ENCODE measurements at regions of chr4 and their contacts with region 1.

Region 1: DNA sequence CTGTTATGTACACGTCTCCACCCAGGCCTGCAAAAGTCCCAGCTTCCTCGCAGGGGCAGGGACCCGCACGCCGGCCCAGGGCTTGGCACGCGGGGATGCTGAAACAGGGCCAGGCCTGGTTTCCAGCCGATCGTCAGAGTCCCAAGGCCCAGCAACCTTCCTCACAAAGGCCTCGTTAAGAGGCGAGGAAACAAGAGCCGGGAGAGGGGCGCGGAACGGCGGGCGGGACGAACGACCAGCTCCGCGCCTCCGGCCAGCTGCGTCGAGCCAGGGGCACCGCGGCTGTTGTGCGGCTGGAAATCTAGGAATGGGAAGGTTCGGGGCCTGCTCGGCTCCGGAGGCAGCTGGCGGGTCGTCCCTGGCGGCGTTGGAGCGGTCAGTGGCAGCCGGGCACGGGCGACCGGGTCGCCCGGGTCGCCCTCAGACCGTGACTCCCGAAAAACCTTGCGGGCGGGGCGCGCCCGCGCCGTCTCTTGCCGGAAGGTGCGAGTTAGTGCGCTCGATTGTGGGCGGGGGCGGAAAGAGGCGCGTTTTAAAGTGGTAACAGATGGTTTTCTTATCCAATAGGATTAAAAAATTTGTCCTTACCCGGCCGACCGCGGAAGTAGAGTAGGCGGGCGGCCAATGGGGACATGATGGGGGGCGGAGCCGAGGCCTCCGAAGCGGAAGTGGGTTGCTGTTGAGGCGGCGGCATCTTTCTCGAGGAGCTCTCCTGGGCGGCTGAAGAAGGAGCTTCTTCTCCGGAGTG is at the start of gene RNF4:
- DNase-seq: peak; percentile 98
- H3K4me3 Mint-ChIP-seq: peak within 1 kb of the TSS; percentile 97
- H3K27ac Mint-ChIP-seq: peak within 1 kb of the TSS; percentile 98
- H3K4me1 Mint-ChIP-seq: peaks cover 42% of the 10 kb centered on the region
- H3K27me3 Mint-ChIP-seq: no peaks in the 10 kb centered on the region
- total RNA-seq, gene RNF4: 84.6 to 90.3 TPM

Region 2: GRCh38 chr4:2220016-2220630 is 248.5 kb before region 1 on chr4:
- CTCF ChIA-PET with region 1: interaction called, 15 read pairs
- POLR2A ChIA-PET with region 1: interaction called, 3 read pairs
- intact Hi-C with region 1: no loop called
- DNase-seq: peak; percentile 84
- H3K4me3 Mint-ChIP-seq: no peak overlapping the region
- H3K27ac Mint-ChIP-seq: no peak overlapping the region
- H3K4me1 Mint-ChIP-seq: peaks cover 5% of the 10 kb centered on the region
- H3K27me3 Mint-ChIP-seq: no peaks in the 10 kb centered on the region

Region 3: GRCh38 chr4:2262143-2262943 is 206.3 kb before region 1 on chr4:
- CTCF ChIA-PET with region 1: no interaction called
- POLR2A ChIA-PET with region 1: interaction called, 7 read pairs
- intact Hi-C with region 1: loop called (anchors 2 kb)
- DNase-seq: peak; percentile 99
- H3K4me3 Mint-ChIP-seq: peak overlapping the region; percentile 62
- H3K27ac Mint-ChIP-seq: peak overlapping the region; percentile 54
- H3K4me1 Mint-ChIP-seq: peaks cover 3% of the 10 kb centered on the region
- H3K27me3 Mint-ChIP-seq: no peaks in the 10 kb centered on the region

Region 4: GRCh38 chr4:2484993-2485392 is 16.4 kb after region 1 on chr4:
- CTCF ChIA-PET with region 1: interaction called, 9 read pairs
- POLR2A ChIA-PET with region 1: interaction called, 40 read pairs
- intact Hi-C with region 1: loop called (anchors 1 kb)
- DNase-seq: peak; percentile 80
- H3K4me3 Mint-ChIP-seq: peak overlapping the region; percentile 17
- H3K27ac Mint-ChIP-seq: peak overlapping the region; percentile 34
- H3K4me1 Mint-ChIP-seq: peaks cover 86% of the 10 kb centered on the region
- H3K27me3 Mint-ChIP-seq: no peaks in the 10 kb centered on the region

Region 5: DNA sequence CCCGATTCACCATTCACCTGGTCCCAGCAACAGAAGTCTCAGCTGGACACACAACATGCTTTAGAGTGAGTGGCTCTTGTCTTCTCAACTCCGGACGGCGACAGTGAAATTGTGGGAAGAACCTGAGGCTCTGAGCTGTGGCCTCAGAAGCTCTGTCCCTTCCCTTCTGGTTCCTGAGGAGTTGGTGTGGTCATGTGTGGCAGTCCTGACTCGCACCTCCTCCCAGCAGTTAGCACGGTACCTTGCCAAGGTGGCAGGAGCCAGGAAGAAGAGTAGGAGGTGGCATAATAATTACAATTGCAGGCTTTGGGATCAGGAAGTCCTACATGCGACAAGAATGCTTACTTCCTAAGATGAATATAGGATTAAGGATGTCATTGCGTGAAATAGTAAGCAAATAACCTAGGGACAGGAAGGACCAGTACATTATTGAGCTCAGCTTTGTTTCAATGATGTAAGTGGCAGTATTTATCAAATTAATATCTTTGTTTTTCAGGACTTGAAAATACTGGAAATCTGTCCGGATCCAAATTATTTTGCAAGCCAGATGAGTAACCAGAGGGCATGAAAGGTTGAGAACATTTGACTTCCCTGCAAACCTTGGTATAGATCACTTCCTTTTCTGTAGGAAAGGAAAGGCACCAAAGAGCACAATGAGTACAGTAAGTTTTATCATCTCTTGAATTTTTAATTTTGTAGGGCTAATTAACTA is 21.4 kb after region 1 on chr4:
- CTCF ChIA-PET with region 1: interaction called, 9 read pairs
- POLR2A ChIA-PET with region 1: interaction called, 40 read pairs
- intact Hi-C with region 1: loop called (anchors 1 kb)
- DNase-seq: no peak
- H3K4me3 Mint-ChIP-seq: no peak overlapping the region
- H3K27ac Mint-ChIP-seq: peak overlapping the region; percentile 76
- H3K4me1 Mint-ChIP-seq: peaks cover 63% of the 10 kb centered on the region
- H3K27me3 Mint-ChIP-seq: no peaks in the 10 kb centered on the region

Region 6: DNA sequence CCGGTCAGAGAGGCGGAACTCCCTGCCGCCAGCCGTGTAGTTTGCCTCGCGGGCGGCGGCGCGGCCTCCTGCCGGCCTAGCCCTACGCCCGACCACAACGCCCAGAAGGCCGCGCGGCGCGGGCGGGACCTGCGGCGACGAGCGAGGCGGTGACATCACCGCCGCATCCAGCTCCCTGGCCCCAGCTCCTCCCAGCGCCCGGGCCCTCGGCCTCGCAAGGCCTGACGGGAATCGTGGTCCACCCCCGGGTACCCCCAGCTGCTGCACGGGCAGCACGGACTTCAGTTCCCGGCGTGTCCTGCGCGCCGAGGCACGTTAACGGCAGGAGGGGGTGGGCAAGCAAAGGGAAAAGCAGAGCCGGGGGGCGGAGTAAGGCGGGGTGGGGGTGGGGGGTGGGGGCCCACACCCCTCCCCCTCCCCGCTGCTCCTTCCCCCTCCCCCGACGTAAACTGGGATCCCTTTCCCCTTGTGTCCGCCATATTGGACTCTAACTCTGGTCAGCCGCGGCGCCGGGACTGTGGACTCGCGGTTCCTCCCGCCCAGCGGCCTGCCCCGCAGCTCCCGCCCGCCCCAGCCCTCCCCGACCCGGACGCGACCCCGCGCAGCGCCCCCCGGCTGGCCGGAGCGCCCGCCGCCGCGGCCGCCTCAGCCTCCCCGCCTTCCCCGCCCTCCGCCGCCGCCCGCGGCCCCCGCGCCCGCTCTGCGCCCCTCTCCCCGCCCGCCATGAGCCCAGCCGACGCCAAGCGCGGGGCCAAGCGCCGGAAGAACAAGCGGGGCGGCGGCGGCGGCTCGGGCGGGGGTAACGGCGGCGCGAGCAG is 67.8 kb after region 1 on chr4 and contains the start of gene FAM193A:
- CTCF ChIA-PET with region 1: interaction called, 4 read pairs
- POLR2A ChIA-PET with region 1: interaction called, 5 read pairs
- intact Hi-C with region 1: loop called (anchors 1 kb)
- DNase-seq: peak; percentile 100
- H3K4me3 Mint-ChIP-seq: peak within 1 kb of the TSS; percentile 87
- H3K27ac Mint-ChIP-seq: peak within 1 kb of the TSS; percentile 86
- H3K4me1 Mint-ChIP-seq: peaks cover 20% of the 10 kb centered on the region
- H3K27me3 Mint-ChIP-seq: no peaks in the 10 kb centered on the region
- total RNA-seq, gene FAM193A: 21.7 to 22.6 TPM